CD8-positive, alpha-beta T cell (primary cell): ENCODE measurements at regions of chr9 and their contacts with region 1.

Region 1: DNA sequence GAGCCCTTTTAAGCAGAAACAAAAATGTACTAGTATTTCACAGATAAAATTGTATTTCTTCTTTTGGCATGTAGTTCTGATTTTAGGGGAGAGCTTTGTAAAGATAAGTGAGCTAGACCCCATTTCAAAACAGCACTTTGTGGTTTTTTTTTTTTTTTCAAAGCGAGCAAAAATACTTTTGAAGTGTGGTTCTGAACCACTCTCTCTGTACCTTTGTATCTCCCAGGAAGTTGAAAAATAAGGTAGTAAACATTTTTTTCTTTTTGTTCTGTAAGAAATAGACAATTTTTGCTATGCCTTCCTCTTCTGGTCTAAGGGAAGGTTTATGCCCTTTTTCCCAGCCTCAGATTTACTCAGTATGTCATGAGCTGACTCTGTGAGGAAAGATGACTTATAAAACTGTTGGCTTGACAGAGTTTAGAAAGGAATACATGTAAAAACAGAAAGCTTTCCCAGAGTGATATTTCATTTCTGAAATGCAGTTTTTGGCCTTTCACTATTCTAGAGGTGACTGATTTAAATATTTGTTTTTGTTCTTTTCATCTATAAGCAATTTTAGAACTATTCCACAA is 12.5 kb downstream of the ERCC6L2 start:
- DNase-seq: peak in 2 of 9 experiments; percentile 39 to 69
- ATAC-seq: peak; percentile 80
- H3K4me3 ChIP-seq: peak overlapping the region in 1 of 2 experiments; percentile 25
- H3K4me3 Mint-ChIP-seq: peak overlapping the region; percentile 71
- H3K27ac ChIP-seq: peak overlapping the region; percentile 14 to 63
- H3K27ac Mint-ChIP-seq: peak overlapping the region; percentile 88
- H3K4me1 ChIP-seq: peaks cover 80% of the 10 kb centered on the region
- H3K4me1 Mint-ChIP-seq: peaks cover 79% of the 10 kb centered on the region
- H3K27me3 ChIP-seq: no peaks in the 10 kb centered on the region
- H3K27me3 Mint-ChIP-seq: no peaks in the 10 kb centered on the region
- CTCF ChIP-seq: no peak

Region 2: DNA sequence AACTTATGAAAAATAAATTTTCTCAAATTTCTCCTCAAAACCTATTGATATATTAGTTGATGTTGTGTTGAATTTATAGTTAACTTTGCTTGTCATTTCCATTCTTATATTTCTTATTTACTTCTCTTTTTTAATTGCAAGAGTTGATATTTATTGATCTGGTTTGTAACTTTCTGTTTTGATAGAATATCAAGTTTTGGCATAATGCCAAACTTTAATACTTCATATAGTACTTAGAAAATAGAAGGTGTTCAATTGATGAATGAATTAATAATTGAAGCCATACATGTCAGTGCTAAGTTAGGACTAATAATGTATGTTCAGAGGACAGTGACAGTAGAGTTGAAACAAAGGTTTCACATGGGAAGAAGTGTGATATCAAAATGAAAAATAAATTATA is 15.4 kb after region 1 on chr9:
- CTCF ChIA-PET with region 1: interaction called, 3 read pairs
- POLR2A ChIA-PET with region 1: no interaction called
- intact Hi-C with region 1: loop called in 1 of 2 experiments (anchors 2 kb)
- DNase-seq: no peak
- ATAC-seq: no peak
- H3K4me3 ChIP-seq: no peak overlapping the region
- H3K4me3 Mint-ChIP-seq: no peak overlapping the region
- H3K27ac ChIP-seq: no peak overlapping the region
- H3K27ac Mint-ChIP-seq: no peak overlapping the region
- H3K4me1 ChIP-seq: peaks cover 9% of the 10 kb centered on the region
- H3K4me1 Mint-ChIP-seq: peaks cover 41% of the 10 kb centered on the region
- H3K27me3 ChIP-seq: no peaks in the 10 kb centered on the region
- H3K27me3 Mint-ChIP-seq: no peaks in the 10 kb centered on the region
- CTCF ChIP-seq: no peak

Region 3: GRCh38 chr9:96020792-96021550 is 133.0 kb after region 1 on chr9:
- CTCF ChIA-PET with region 1: no interaction called
- POLR2A ChIA-PET with region 1: no interaction called
- intact Hi-C with region 1: loop called in 1 of 2 experiments (anchors 5 kb)
- DNase-seq: peak in 7 of 9 experiments; percentile 39 to 72 (median 61)
- ATAC-seq: peak; percentile 43
- H3K4me3 ChIP-seq: peak overlapping the region; percentile 61 to 69
- H3K4me3 Mint-ChIP-seq: peak overlapping the region; percentile 90
- H3K27ac ChIP-seq: peak overlapping the region; percentile 74 to 80
- H3K27ac Mint-ChIP-seq: peak overlapping the region; percentile 89
- H3K4me1 ChIP-seq: peaks cover 54% of the 10 kb centered on the region
- H3K4me1 Mint-ChIP-seq: peaks cover 74% of the 10 kb centered on the region
- H3K27me3 ChIP-seq: no peaks in the 10 kb centered on the region
- H3K27me3 Mint-ChIP-seq: no peaks in the 10 kb centered on the region
- CTCF ChIP-seq: no peak